Vagina (tissue), 2 donors: ENCODE measurements at regions of chr18 and their contacts with region 1.

Region 1: GRCh38 chr18:24362758-24363157 is 34.9 kb downstream of the OSBPL1A start:
- DNase-seq: peak in 1 of 2 donors; percentile 7
- H3K4me3 ChIP-seq: no peak overlapping the region
- H3K27ac ChIP-seq: no peak overlapping the region
- H3K4me1 ChIP-seq: peaks cover 6% of the 10 kb centered on the region
- H3K27me3 ChIP-seq: no peaks in the 10 kb centered on the region
- CTCF ChIP-seq: no peak
- POLR2A ChIP-seq: no peak

Region 2: DNA sequence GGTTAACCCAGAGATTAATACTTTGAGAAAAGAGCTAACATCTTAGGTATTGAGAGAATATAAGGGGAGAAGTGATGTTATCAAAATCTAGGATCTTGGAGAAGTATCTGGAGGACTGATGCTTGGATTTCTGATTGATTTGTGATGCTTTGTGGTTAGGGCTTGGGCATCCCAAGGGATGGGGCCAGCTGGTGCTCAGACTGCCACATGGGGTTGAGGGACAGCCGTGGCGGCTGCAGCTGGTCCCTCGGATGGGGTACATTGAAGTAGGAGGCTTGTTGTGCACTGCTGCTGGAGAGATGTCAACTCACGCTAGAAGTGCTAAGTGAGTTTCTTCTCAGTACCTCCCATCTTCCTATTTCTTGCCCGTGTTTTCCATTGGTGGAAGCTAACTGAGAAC is 120.1 kb after region 1 on chr18:
- intact Hi-C with region 1: loop called (anchors 5 kb)
- DNase-seq: no peak
- H3K4me3 ChIP-seq: no peak overlapping the region
- H3K27ac ChIP-seq: no peak overlapping the region
- H3K4me1 ChIP-seq: no peaks in the 10 kb centered on the region
- H3K27me3 ChIP-seq: no peaks in the 10 kb centered on the region
- CTCF ChIP-seq: no peak
- POLR2A ChIP-seq: no peak